MCF 10A (cell line): ENCODE measurements at regions of chr12 and their contacts with region 1.

Region 1: GRCh38 chr12:11648831-11649702 is at the start of gene ETV6:
- DNase-seq: peak; percentile 92
- H3K4me3 Mint-ChIP-seq: peak within 1 kb of the TSS; percentile 82
- H3K27ac Mint-ChIP-seq: peak within 1 kb of the TSS; percentile 77
- H3K4me1 Mint-ChIP-seq: peaks cover 15% of the 10 kb centered on the region
- H3K27me3 Mint-ChIP-seq: no peaks in the 10 kb centered on the region
- CTCF ChIP-seq: no peak
- total RNA-seq, gene ETV6: 16.9 and 19.3 TPM in 2 replicates

Region 2: DNA sequence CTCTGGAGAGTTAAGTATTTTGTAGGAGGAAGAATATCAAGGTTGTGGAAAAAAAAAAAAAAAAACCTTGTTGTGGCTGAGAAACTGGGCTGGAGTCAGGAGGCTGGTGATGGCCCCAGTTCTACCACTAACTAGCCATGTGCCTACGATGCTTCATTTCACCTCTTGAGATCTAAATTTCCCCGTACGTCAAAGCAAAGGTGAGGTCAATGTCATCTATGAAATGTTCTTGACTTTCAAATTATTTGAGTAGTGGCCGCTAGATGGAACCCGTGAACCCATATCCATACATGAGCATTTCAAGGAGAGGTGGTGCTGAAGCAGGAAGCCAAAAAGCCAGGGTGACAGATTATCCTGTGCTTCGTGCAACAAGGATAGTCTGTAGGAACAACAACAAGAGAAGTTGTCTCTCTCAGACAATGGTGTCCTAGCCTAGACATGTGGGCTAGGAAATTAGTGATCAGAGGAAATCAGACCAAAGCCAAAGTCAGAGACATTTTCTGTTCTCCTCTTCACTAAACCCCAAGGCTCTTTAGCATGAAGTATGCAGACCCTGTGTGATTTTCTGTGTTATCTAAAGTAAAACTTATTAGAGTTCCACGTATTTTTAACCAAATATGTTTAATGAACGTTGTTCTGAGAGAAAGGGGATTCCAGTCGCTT is 95.1 kb before region 1 on chr12:
- CTCF ChIA-PET with region 1: interaction called, 3 read pairs
- POLR2A ChIA-PET with region 1: interaction called, 3 read pairs
- intact Hi-C with region 1: loop called (anchors 2 kb)
- DNase-seq: peak; percentile 78
- H3K4me3 Mint-ChIP-seq: no peak overlapping the region
- H3K27ac Mint-ChIP-seq: no peak overlapping the region
- H3K4me1 Mint-ChIP-seq: peaks cover 11% of the 10 kb centered on the region
- H3K27me3 Mint-ChIP-seq: peaks cover 57% of the 10 kb centered on the region
- CTCF ChIP-seq: peak; percentile 59

Region 3: DNA sequence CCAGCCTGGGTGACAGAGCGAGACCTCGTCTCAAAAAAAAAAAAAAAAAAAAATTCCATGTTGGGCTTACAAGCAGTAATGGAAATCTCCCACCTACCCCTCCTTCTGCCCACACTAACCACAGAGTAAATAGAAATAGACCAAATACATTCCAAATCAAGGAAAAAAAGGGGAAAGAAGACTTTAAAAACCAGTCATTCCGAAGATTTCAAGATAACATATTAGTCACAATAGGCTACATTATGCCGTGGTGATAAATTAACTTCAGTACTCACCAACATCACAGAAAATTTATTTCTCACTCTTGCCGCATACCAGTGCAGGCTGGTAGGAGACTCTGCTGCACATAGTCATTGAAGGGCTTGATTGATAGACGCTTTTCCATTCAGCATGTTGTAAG is 15.1 kb before region 1 on chr12:
- CTCF ChIA-PET with region 1: interaction called, 4 read pairs
- POLR2A ChIA-PET with region 1: interaction called, 11 read pairs
- intact Hi-C with region 1: no loop called
- DNase-seq: no peak
- H3K4me3 Mint-ChIP-seq: no peak overlapping the region
- H3K27ac Mint-ChIP-seq: peak overlapping the region; percentile 51
- H3K4me1 Mint-ChIP-seq: peaks cover 6% of the 10 kb centered on the region
- H3K27me3 Mint-ChIP-seq: no peaks in the 10 kb centered on the region
- CTCF ChIP-seq: no peak

Region 4: DNA sequence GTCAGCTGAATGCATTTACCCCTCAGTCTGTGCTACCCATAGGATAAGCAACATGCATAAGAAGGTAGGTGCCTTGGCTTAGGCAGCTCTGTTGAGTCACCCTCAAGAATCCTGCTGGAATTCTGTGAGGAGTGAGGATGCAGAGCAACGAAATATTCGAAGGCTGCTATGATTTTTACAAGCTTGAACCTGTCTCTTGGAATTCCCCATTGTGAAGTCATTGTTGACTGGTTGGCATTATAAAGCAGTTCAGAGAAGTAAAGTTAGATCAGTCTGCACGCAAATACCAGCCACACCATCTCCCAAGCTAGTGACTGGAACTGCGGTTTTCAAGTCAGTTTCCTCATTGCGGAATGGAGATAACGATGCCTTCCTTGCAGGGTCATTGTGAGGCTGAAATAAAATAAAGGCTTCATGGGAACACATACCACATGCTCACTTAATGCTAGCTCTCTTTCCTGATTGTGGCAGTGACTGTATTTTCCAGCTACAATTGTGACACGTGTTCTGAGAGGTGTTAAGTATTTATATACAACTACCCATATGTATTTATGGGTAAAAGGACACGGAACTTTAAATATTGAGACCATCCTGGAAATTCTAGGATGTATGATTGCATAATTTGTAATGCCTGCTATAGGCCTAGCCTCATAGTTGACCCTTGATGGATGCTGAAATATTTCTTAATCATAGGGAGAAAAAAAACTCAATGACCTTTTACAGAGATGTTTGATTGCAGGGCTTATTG is 97.1 kb after region 1 on chr12:
- CTCF ChIA-PET with region 1: no interaction called
- POLR2A ChIA-PET with region 1: interaction called, 9 read pairs
- intact Hi-C with region 1: loop called (anchors 5 kb)
- DNase-seq: peak; percentile 90
- H3K4me3 Mint-ChIP-seq: no peak overlapping the region
- H3K27ac Mint-ChIP-seq: peak overlapping the region; percentile 28
- H3K4me1 Mint-ChIP-seq: peaks cover 34% of the 10 kb centered on the region
- H3K27me3 Mint-ChIP-seq: no peaks in the 10 kb centered on the region
- CTCF ChIP-seq: no peak

Region 5: GRCh38 chr12:11877869-11878780 is 229.1 kb after region 1 on chr12:
- CTCF ChIA-PET with region 1: no interaction called
- POLR2A ChIA-PET with region 1: interaction called, 9 read pairs
- intact Hi-C with region 1: loop called (anchors 5 kb)
- DNase-seq: peak; percentile 86
- H3K4me3 Mint-ChIP-seq: peak overlapping the region; percentile 22
- H3K27ac Mint-ChIP-seq: peak overlapping the region; percentile 76
- H3K4me1 Mint-ChIP-seq: peaks cover 30% of the 10 kb centered on the region
- H3K27me3 Mint-ChIP-seq: no peaks in the 10 kb centered on the region
- CTCF ChIP-seq: no peak